ENCODE measurements at regions of chr6 and their contacts with region 1.

Region 1: DNA sequence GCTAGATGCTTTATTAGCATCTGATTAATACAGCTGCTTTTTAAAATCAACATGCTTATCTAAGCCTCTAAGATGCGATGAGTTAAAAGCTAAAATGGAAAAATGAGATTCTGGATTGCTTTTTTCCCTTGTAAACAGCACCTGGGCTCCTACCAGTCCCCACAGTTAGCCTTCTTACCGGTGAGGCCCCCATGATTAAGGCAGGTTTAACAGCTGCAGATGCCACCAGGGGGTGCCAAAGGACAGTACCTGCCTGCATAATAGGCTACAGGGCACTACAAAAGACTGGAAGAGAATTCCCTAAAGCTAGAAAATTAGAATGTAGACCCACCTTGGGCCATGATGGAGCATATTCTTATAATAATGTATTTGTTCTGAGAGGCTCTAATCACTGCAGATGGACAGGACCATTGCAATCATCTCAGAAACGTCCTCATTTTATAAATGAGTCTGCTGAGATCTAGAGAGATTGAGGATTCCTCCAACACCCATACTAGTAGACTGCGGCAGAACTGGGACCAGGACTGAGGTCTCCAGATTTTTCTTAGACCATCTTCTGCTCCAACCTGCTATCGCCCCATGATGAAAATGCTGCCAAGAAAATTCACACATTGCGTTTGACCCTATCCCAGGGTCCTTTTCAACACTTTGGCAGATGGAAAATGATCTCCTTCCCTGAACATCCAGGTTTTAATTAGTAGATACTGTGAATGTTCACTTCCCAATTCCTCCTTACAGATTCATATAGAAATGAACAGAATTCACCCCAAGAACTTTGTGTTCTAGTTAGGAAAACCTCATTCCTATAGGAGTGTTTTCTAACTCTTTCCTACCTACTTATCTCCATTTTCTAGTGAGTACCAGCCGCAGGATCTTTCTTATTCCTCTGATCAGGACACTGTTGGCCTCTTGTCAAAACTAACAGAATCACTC is 148.8 kb downstream of the RPS12 start:
- DNase-seq: peak; percentile 66 to 91
- H3K4me3 ChIP-seq: no peak overlapping the region
- H3K27ac ChIP-seq: no peak overlapping the region
- H3K4me1 ChIP-seq: peaks cover 0 to 5% (median under 1%) of the 10 kb centered on the region in 4 experiments; a peak in 2 of 7 replicates
- H3K27me3 ChIP-seq: no peaks in the 10 kb centered on the region
- CTCF ChIP-seq: peak; percentile 72 to 88 (median 83)
- EP300 ChIP-seq: no peak
- POLR2A ChIP-seq: no peak
- RAD21 ChIP-seq: peak; percentile 94

Region 2: GRCh38 chr6:132820629-132821381 is 142.4 kb before region 1 on chr6:
- CTCF ChIA-PET with region 1: interaction called, 26 read pairs
- POLR2A ChIA-PET with region 1: interaction called, 5 read pairs
- DNase-seq: peak in 1 of 2 experiments; percentile 53
- H3K4me3 ChIP-seq: no peak overlapping the region
- H3K27ac ChIP-seq: no peak overlapping the region; the same call in 1 of the 2 replicates
- H3K4me1 ChIP-seq: peaks cover 0 to 8% (median 5%) of the 10 kb centered on the region in 4 experiments; a peak in 6 of 7 replicates
- H3K27me3 ChIP-seq: no peaks in the 10 kb centered on the region
- CTCF ChIP-seq: no peak
- EP300 ChIP-seq: no peak
- POLR2A ChIP-seq: peak; percentile 88 to 97
- RAD21 ChIP-seq: no peak

Region 3: GRCh38 chr6:132872923-132873322 is 90.3 kb before region 1 on chr6:
- CTCF ChIA-PET with region 1: no interaction called
- POLR2A ChIA-PET with region 1: no interaction called
- DNase-seq: no peak
- H3K4me3 ChIP-seq: no peak overlapping the region
- H3K27ac ChIP-seq: no peak overlapping the region
- H3K4me1 ChIP-seq: no peaks in the 10 kb centered on the region
- H3K27me3 ChIP-seq: no peaks in the 10 kb centered on the region
- CTCF ChIP-seq: no peak
- EP300 ChIP-seq: no peak
- POLR2A ChIP-seq: no peak
- RAD21 ChIP-seq: no peak

Region 4: DNA sequence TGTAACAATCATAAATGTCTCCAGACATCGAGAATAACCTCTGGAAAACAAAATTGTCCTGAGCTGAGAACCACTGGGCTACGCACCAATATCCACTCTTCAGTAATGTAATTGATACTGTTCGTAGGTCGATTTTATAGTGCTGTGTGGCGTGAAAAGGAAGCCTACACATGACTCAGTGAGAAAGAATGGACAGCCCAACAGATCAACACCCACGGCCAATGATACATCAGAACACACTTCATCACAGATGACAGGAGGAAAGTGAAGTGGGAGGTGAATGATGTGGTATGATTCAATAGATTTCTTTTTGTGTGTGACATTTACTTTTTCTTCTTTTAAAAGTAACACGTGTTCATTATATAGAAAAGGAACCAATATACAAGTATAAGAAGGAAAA is 55.3 kb before region 1 on chr6:
- CTCF ChIA-PET with region 1: no interaction called
- POLR2A ChIA-PET with region 1: no interaction called
- DNase-seq: no peak
- H3K4me3 ChIP-seq: no peak overlapping the region
- H3K27ac ChIP-seq: no peak overlapping the region
- H3K4me1 ChIP-seq: no peaks in the 10 kb centered on the region
- H3K27me3 ChIP-seq: no peaks in the 10 kb centered on the region
- CTCF ChIP-seq: no peak
- EP300 ChIP-seq: no peak
- POLR2A ChIP-seq: no peak
- RAD21 ChIP-seq: no peak

Region 5: DNA sequence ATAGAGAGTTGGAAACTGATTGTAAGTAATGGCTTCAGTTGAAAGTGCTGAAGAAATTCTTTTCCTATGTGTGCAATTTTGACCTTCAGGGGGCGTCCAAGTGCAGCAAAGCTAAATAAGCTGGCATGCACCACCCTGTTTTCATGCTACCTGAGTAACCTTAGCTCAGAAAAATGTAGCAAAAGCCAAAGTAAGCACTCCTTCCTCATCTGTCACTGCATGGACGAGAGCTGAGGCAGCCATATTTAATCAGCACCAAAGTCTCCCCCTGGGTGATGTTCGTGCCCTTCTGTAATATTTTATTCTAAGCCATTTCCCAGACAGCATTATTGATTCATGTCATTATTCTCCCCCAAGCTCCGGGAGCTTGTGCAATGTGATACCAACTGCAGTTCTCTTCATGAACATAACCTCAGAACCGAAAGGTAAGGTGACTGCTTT is 25.7 kb before region 1 on chr6:
- CTCF ChIA-PET with region 1: interaction called, 10 read pairs
- POLR2A ChIA-PET with region 1: no interaction called
- DNase-seq: peak in 1 of 2 experiments; percentile 72
- H3K4me3 ChIP-seq: no peak overlapping the region
- H3K27ac ChIP-seq: no peak overlapping the region
- H3K4me1 ChIP-seq: peaks cover 0 to 4% (median 0%) of the 10 kb centered on the region in 4 experiments; a peak in 1 of 7 replicates
- H3K27me3 ChIP-seq: no peaks in the 10 kb centered on the region
- CTCF ChIP-seq: peak in 2 of 3 experiments; percentile 66 to 79; a peak in 3 of 4 replicates
- EP300 ChIP-seq: no peak
- POLR2A ChIP-seq: no peak
- RAD21 ChIP-seq: peak; percentile 74 to 75

Region 6: GRCh38 chr6:132973514-132973993 is 10.4 kb after region 1 on chr6:
- CTCF ChIA-PET with region 1: interaction called, 38 read pairs
- POLR2A ChIA-PET with region 1: no interaction called
- DNase-seq: no peak
- H3K4me3 ChIP-seq: no peak overlapping the region
- H3K27ac ChIP-seq: no peak overlapping the region
- H3K4me1 ChIP-seq: no peaks in the 10 kb centered on the region
- H3K27me3 ChIP-seq: no peaks in the 10 kb centered on the region
- CTCF ChIP-seq: no peak
- EP300 ChIP-seq: no peak
- POLR2A ChIP-seq: no peak
- RAD21 ChIP-seq: no peak

Region 7: DNA sequence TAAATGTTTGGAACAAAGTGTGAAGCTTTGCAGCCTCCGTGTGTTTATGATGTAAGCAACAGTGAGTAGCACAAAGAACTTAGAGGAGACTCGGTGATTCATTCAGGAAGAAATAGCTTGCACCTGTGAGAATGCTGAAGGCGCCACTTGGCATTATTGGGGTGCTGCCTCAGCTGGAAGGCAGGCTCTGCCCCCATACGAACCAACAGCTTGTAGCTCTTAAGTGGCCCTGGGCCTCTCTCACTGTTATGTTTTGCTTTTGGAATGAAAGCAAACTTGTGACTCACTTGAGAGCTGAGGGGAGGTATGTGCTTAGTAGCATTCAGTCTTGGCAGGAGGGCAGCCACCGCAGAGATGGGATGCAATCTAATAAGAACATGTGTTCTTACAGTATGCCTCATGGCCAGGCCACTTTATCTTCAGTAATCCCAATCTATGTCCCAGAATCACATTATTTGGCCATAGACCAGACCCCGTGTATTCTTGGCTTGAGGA is 588.7 kb after region 1 on chr6:
- CTCF ChIA-PET with region 1: interaction called, 16 read pairs
- POLR2A ChIA-PET with region 1: no interaction called
- DNase-seq: no peak
- H3K4me3 ChIP-seq: no peak overlapping the region
- H3K27ac ChIP-seq: no peak overlapping the region
- H3K4me1 ChIP-seq: peaks cover 7 to 17% (median 12%) of the 10 kb centered on the region in 4 experiments
- H3K27me3 ChIP-seq: no peaks in the 10 kb centered on the region
- CTCF ChIP-seq: no peak
- EP300 ChIP-seq: no peak
- POLR2A ChIP-seq: no peak
- RAD21 ChIP-seq: no peak